ENCODE measurements at regions of chr3 and their contacts with region 1.

Region 1: GRCh38 chr3:57852896-57853295 is 96.8 kb downstream of the SLMAP start:
- DNase-seq: no peak
- H3K4me3 ChIP-seq: no peak overlapping the region
- H3K27ac ChIP-seq: no peak overlapping the region
- H3K4me1 ChIP-seq: no peaks in the 10 kb centered on the region
- H3K27me3 ChIP-seq: no peaks in the 10 kb centered on the region
- CTCF ChIP-seq: peak; percentile 59

Region 2: GRCh38 chr3:57100046-57100695 is 752.7 kb before region 1 on chr3:
- CTCF ChIA-PET with region 1: no interaction called
- POLR2A ChIA-PET with region 1: no interaction called
- intact Hi-C with region 1: loop called (anchors 5 kb)
- DNase-seq: peak; percentile 48 to 63
- H3K4me3 ChIP-seq: no peak overlapping the region
- H3K27ac ChIP-seq: 0 out of 2 replicates have a peak overlapping the region, but pooled peaks have one; percentile 62
- H3K4me1 ChIP-seq: peaks cover 20% of the 10 kb centered on the region
- H3K27me3 ChIP-seq: no peaks in the 10 kb centered on the region
- CTCF ChIP-seq: peak; percentile 85

Region 3: DNA sequence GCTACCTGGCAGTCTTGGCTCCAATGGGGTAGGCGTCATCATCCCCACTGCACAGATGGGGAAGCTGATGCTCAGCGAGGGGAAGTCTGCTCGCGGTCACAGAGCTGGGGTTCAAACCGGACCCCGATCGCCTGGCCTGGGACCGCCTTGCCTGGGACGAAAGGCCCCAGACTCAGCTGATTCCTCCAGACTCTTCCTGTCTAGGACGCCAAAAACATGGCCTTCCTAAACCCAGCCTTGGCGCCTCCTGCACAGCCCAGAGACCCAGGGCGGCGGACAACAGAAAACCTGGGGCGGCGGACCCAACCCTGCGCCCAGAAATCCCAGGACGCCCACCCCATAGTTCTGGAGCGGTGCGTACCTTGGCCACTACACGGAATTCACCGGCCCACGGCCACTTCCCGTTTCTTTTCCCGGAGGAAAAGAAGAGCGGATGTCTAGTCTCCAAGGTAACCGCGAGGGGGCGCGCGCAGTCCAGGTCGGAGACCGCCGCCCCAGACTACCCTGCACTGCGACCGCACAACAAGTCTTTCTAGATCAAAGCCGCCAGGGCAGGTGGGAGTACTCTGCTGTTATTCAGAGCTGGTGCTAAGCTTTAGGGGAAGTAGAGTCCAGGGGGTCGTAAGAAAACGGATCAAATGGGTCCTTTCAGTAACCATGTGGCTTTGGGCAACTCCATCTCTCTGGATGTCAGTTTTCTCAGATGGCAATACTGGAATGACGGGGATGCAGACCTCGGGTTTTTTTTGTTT is 682.8 kb before region 1 on chr3:
- CTCF ChIA-PET with region 1: interaction called, 6 read pairs
- POLR2A ChIA-PET with region 1: no interaction called
- intact Hi-C with region 1: loop called (anchors 5 kb)
- DNase-seq: peak; percentile 60 to 75
- H3K4me3 ChIP-seq: peak overlapping the region; percentile 54
- H3K27ac ChIP-seq: no peak overlapping the region
- H3K4me1 ChIP-seq: peaks cover 3% of the 10 kb centered on the region; the same call in 1 of the 2 replicates
- H3K27me3 ChIP-seq: no peaks in the 10 kb centered on the region
- CTCF ChIP-seq: peak; percentile 81

Region 4: DNA sequence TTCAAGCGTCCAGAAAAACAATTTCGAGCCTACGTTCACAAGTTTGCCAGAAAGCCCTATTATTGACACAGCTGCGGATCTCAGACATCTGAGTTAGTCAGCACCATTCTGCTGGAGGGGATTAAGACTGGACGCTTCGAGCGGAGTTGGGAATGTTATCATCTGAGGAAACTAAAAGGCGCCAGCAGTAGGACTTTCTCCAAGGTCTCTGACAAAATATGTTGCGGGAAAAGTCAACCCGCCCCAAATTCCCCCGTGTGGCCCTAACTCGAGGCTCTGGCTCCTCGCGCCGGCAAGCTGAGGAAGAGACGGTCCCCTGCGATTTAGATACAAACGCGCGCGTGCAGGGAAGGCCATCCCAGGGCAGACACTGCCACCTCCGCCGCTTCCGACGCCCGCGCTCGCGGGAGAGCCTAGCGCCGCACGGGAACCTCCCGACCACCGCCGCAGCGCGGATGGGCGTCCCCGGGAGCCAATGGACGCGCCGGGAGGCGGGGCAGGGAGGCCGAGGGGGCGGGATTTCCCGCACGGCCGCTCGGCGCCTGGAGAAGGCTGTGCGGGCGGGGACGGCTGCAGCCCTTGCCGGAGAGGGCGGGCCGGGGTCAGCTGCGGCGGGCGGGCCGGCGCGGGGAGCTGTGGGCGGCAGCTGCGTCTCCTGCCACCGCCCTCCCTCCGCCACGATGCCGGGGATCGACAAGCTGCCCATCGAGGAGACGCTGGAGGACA is 625.5 kb before region 1 on chr3 and contains the start of gene APPL1:
- CTCF ChIA-PET with region 1: no interaction called
- POLR2A ChIA-PET with region 1: interaction called, 19 read pairs
- intact Hi-C with region 1: no loop called
- DNase-seq: peak; percentile 78 to 97
- H3K4me3 ChIP-seq: peak within 1 kb of the TSS; percentile 66
- H3K27ac ChIP-seq: peak within 1 kb of the TSS; percentile 57
- H3K4me1 ChIP-seq: peaks cover 27% of the 10 kb centered on the region
- H3K27me3 ChIP-seq: no peaks in the 10 kb centered on the region
- CTCF ChIP-seq: no peak
- total RNA-seq, gene APPL1: 24.2 and 34.1 TPM in 2 replicates

Region 5: DNA sequence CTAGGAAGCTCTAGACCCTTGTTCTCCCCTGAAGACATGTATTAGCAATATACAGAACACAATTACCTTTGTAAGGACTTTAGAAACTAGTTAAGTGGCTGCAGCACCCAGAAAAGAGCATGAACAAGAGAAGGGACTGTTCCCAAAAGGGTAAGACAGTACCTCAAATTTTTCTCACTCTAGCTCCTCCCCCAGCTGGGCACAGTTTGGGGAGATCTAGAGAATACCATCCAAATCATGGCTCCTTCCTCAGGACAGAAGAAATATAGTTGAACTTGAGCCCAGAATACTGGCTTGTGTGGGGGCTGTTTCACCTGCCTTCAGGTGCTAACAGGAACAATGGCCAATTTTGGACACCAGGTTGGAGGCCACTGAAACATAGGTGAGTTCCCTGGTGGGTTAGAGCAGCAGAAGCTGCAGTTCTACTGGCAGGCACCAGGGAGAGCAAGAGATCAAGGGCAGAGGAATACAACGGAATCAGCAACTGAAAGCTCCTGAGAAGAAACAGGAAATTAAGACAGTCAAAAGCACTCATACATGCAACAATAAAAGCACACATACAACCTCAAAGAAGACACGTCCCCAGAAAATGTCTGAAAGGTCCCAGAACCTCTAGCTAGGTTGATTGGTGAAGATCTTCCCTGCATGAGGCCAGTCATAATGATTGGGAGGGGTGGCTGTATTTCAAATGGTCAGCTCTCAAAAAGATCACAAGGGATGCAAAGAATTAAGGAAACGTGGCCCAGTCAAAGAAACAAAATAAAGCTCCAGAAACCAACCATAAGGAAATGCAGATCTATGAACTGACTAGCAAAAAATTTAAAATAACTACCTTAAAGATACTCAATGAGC is 455.5 kb before region 1 on chr3:
- CTCF ChIA-PET with region 1: no interaction called
- POLR2A ChIA-PET with region 1: no interaction called
- intact Hi-C with region 1: loop called (anchors 2 kb)
- DNase-seq: peak; percentile 58 to 61
- H3K4me3 ChIP-seq: no peak overlapping the region
- H3K27ac ChIP-seq: no peak overlapping the region
- H3K4me1 ChIP-seq: no peaks in the 10 kb centered on the region
- H3K27me3 ChIP-seq: no peaks in the 10 kb centered on the region
- CTCF ChIP-seq: peak; percentile 86

Region 6: GRCh38 chr3:57592290-57592689 is 260.6 kb before region 1 on chr3:
- CTCF ChIA-PET with region 1: no interaction called
- POLR2A ChIA-PET with region 1: interaction called, 12 read pairs
- intact Hi-C with region 1: no loop called
- DNase-seq: no peak
- H3K4me3 ChIP-seq: no peak overlapping the region
- H3K27ac ChIP-seq: peak overlapping the region; percentile 6; the same call in 1 of the 2 replicates
- H3K4me1 ChIP-seq: peaks cover 39% of the 10 kb centered on the region
- H3K27me3 ChIP-seq: no peaks in the 10 kb centered on the region
- CTCF ChIP-seq: no peak

Region 7: GRCh38 chr3:57682284-57682683 is 170.6 kb before region 1 on chr3:
- CTCF ChIA-PET with region 1: no interaction called
- POLR2A ChIA-PET with region 1: interaction called, 14 read pairs
- intact Hi-C with region 1: no loop called
- DNase-seq: no peak
- H3K4me3 ChIP-seq: no peak overlapping the region
- H3K27ac ChIP-seq: no peak overlapping the region
- H3K4me1 ChIP-seq: no peaks in the 10 kb centered on the region
- H3K27me3 ChIP-seq: no peaks in the 10 kb centered on the region
- CTCF ChIP-seq: peak; percentile 55

Region 8: DNA sequence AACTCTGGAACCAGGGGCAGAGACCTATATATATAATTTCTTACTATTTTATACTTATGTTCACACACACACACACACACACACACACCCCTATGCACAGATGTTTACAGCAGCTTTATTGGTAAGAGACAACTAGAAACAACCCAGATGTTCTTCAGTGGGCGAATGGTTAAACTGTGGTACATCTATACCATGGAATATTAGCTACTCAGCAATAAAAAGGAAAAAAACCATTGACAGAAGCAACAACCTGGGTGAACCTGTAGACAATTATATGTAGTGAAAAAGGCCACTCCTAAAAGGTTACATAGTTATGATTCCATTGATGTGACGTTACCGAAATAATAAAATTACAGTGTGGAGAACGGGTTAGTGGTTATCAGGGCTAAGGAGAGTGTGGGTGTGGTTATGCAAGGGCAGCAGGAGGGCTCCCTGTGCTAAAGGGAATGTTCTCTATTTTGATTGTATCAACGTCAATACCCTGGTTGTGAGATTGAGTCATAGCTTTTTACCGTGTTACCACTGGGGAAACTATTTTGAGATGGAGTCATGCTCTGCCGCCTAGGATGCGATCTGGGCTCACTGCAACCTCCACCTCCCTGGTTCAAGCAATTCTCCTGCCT is 240.8 kb after region 1 on chr3:
- CTCF ChIA-PET with region 1: no interaction called
- POLR2A ChIA-PET with region 1: no interaction called
- intact Hi-C with region 1: no loop called
- DNase-seq: peak; percentile 67 to 94
- H3K4me3 ChIP-seq: no peak overlapping the region
- H3K27ac ChIP-seq: peak overlapping the region; percentile 62
- H3K4me1 ChIP-seq: peaks cover 7% of the 10 kb centered on the region; the same call in 1 of the 2 replicates
- H3K27me3 ChIP-seq: no peaks in the 10 kb centered on the region
- CTCF ChIP-seq: no peak

Measured in PC-9 (cell line).